ENCODE measurements at regions of chr22 and their contacts with region 1.

Region 1: DNA sequence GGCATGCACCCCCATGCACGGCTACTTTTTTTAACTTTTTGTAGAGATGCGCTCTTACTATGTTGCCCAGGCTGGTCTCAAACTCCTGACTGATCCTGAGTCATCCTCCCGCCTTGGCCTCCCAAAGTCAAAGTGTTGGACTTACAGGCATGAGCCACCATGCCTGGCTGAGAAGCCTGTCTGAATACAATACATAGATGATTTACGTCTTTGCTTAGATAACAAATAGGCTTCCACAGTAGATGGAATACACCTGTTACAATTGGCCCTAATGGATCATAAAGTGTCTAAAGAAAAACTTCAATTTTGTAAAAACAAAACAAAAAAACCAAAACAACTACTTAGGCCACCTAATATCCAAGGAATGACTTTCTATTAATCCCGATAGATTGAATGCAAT is 13.0 kb upstream of the CLTCL1 start:
- DNase-seq: no peak
- ATAC-seq: no peak
- H3K4me3 ChIP-seq: no peak overlapping the region
- H3K27ac ChIP-seq: no peak overlapping the region
- H3K4me1 ChIP-seq: no peaks in the 10 kb centered on the region
- H3K27me3 ChIP-seq: no peaks in the 10 kb centered on the region
- CTCF ChIP-seq: no peak

Region 2: DNA sequence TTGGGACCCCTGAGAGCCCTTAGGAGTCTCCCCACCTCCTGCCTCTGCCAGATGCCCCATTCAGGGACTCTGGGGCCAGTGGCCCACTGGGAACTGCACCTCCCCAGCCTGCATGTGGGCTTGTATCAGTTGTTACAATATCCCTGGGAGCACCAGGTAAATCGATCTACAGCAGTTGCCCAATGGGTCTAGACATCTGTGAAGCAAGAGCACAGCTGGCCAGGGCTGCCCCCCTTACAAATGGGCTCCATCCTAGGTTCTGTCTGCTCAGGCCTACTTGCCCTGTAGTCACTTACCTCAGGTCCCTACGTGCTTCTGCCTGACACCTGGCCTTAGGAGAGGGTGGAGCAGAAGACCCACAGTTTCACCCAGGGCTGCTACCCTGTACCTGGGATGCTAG is 64.3 kb after region 1 on chr22:
- CTCF ChIA-PET with region 1: no interaction called
- POLR2A ChIA-PET with region 1: no interaction called
- intact Hi-C with region 1: no loop called
- DNase-seq: no peak
- ATAC-seq: no peak
- H3K4me3 ChIP-seq: no peak overlapping the region
- H3K27ac ChIP-seq: no peak overlapping the region
- H3K4me1 ChIP-seq: no peaks in the 10 kb centered on the region
- H3K27me3 ChIP-seq: no peaks in the 10 kb centered on the region
- CTCF ChIP-seq: no peak

Region 3: DNA sequence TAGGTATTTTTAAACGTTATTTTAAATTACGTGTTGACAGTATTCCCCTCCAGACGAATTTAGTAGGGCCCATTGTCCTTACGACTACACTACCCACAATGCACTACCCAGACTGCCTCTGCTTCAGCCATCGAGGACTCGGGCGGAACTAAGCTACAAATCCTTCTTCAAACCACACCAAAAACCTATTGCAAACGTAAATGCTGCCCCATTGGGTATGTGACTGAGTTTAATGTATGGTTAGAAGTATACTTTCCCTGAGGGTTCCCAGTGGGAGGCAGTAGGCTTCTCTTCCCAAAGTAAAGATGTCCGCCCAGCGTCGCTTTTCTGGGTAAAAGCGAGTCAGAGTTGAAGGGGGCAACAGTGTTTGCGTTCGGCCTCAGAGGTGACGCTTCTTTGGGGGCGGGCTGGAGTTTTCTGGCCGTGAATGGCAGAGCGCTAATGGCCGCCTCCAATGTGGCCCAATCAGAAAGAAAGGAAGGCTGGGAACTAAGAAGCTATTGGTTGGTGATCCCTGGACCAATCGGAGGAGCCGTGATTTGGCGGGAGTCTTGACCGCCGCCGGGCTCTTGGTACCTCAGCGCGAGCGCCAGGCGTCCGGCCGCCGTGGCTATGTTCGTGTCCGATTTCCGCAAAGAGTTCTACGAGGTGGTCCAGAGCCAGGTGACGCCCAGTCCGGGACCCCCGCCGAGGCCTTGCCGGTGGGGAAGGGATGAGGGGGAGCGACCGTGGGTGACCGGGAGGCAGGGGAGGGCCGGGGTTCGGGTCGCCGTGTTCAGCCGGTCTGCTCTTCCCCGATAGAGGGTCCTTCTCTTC is 175.0 kb after region 1 on chr22 and contains the start of gene CDC45:
- CTCF ChIA-PET with region 1: interaction called, 3 read pairs
- POLR2A ChIA-PET with region 1: no interaction called
- intact Hi-C with region 1: loop called (anchors 5 kb)
- DNase-seq: peak; percentile 93
- ATAC-seq: peak; percentile 89
- H3K4me3 ChIP-seq: peak within 1 kb of the TSS; percentile 88
- H3K27ac ChIP-seq: peak within 1 kb of the TSS; percentile 93
- H3K4me1 ChIP-seq: peaks cover 11% of the 10 kb centered on the region
- H3K27me3 ChIP-seq: no peaks in the 10 kb centered on the region
- CTCF ChIP-seq: no peak
- total RNA-seq, gene CDC45: 70.9 and 77.1 TPM in 2 replicates